CD4-positive, alpha-beta T cell (primary cell): ENCODE measurements at regions of chr12 and their contacts with region 1.

Region 1: GRCh38 chr12:15563663-15564062 is 225.5 kb downstream of the EPS8 start:
- DNase-seq: peak in 4 of 14 experiments; percentile 57 to 72 (median 66)
- ATAC-seq: peak; percentile 85
- H3K4me3 ChIP-seq: peak overlapping the region; percentile 24
- H3K4me3 Mint-ChIP-seq: peak overlapping the region; percentile 56
- H3K27ac ChIP-seq: peak overlapping the region; percentile 64 to 76
- H3K27ac Mint-ChIP-seq: peak overlapping the region; percentile 85
- H3K4me1 ChIP-seq: peaks cover 10% of the 10 kb centered on the region
- H3K4me1 Mint-ChIP-seq: peaks cover 52% of the 10 kb centered on the region
- H3K27me3 ChIP-seq: no peaks in the 10 kb centered on the region
- H3K27me3 Mint-ChIP-seq: no peaks in the 10 kb centered on the region
- CTCF ChIP-seq: no peak

Region 2: DNA sequence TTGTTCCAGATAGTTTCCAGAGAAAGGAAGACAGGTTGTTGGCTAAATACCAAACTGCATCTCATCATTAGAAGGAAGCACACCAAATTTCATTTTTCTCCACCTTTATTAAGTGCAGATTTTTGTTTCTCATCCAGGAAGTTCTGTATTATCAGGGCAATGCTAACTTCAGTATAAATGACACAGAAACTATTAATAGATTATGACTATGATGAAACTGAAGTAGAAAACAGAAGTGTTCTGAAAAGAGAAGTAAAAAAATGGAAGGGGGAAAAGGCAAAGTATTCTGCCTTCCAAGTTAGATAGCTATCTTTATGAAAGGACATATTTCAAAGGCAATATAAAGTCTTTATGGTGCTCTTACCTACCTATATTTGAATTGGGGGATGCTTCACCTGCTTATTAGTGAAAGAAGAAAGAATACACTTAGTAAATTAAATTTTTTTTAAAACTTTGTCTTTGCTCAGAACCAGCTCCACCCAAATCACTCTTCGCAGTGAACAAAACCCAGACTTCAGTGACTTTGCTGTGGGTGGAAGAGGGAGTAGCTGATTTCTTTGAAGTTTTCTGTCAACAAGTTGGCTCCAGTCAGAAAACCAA is 17.5 kb before region 1 on chr12:
- CTCF ChIA-PET with region 1: interaction called, 10 read pairs
- POLR2A ChIA-PET with region 1: interaction called, 110 read pairs
- intact Hi-C with region 1: loop called in 1 of 2 experiments (anchors 1 kb)
- DNase-seq: peak in 10 of 14 experiments; percentile 21 to 81 (median 45)
- ATAC-seq: peak; percentile 93
- H3K4me3 ChIP-seq: peak overlapping the region; percentile 19
- H3K4me3 Mint-ChIP-seq: peak overlapping the region; percentile 83
- H3K27ac ChIP-seq: peak overlapping the region; percentile 59 to 67
- H3K27ac Mint-ChIP-seq: peak overlapping the region; percentile 100
- H3K4me1 ChIP-seq: peaks cover 22% of the 10 kb centered on the region
- H3K4me1 Mint-ChIP-seq: peaks cover 85% of the 10 kb centered on the region
- H3K27me3 ChIP-seq: no peaks in the 10 kb centered on the region
- H3K27me3 Mint-ChIP-seq: no peaks in the 10 kb centered on the region
- CTCF ChIP-seq: no peak